ENCODE measurements at regions of chr2 and their contacts with region 1.

Region 1: GRCh38 chr2:51006641-51007040 is 25.3 kb downstream of the NRXN1 start:
- DNase-seq: no peak
- ATAC-seq: peak; percentile 62
- H3K4me3 Mint-ChIP-seq: no peak overlapping the region
- H3K27ac Mint-ChIP-seq: peak overlapping the region; percentile 21
- H3K4me1 Mint-ChIP-seq: peaks cover 83% of the 10 kb centered on the region
- H3K27me3 Mint-ChIP-seq: no peaks in the 10 kb centered on the region
- CTCF ChIP-seq: no peak

Region 2: GRCh38 chr2:50979495-50979894 is 27.1 kb before region 1 on chr2:
- CTCF ChIA-PET with region 1: interaction called, 5 read pairs
- POLR2A ChIA-PET with region 1: interaction called, 10 read pairs
- DNase-seq: no peak
- ATAC-seq: no peak
- H3K4me3 Mint-ChIP-seq: no peak overlapping the region
- H3K27ac Mint-ChIP-seq: no peak overlapping the region
- H3K4me1 Mint-ChIP-seq: peaks cover 25% of the 10 kb centered on the region
- H3K27me3 Mint-ChIP-seq: no peaks in the 10 kb centered on the region
- CTCF ChIP-seq: no peak